ENCODE measurements at regions of chr18 and their contacts with region 1.

Region 1: GRCh38 chr18:47997338-47997780 is 66.9 kb upstream of the SMAD2 start:
- DNase-seq: peak; percentile 49
- H3K4me3 Mint-ChIP-seq: no peak overlapping the region
- H3K27ac Mint-ChIP-seq: no peak overlapping the region
- H3K4me1 Mint-ChIP-seq: no peaks in the 10 kb centered on the region
- H3K27me3 Mint-ChIP-seq: peaks cover 7% of the 10 kb centered on the region

Region 2: DNA sequence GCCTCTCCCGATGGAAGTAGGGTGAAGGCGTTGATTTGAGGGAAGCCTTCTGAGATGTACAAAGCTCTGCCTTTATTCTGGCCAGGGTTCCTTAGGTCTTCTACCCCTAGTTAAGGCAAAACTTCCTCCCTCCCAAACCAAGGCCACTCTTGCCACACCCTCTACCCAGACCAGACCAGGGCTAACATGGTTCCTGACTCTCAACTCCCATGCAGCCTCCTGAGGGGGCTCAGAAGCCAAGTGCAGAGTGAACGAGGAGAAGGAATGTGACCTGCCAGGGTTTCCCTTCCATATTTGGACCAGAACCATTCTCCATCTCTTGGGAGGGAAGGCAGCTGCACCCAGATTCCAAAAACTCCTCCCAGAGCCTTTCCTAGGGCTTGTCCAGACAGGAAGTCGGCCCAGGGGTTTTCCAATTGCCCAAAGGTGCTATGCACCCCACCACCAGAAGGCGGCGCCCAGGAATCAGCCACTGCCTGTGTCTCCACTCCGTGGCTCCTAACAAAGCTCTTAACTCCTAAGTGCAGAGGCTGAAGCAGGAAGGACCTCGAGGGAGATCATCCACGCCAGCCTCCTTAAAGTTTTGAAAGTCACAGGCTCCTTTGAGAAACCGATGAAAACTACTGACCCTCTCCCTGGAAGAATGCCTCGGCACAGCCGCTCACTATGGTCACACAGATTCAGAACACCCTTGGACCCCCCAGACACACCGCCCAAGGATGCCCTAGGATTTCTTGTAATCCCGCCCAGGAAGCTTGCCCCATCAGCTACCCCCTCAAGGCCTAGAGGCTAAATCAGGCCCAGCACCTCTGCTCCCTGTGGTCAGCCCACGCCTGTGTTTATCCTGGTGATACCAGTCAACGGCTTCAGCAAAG is 224.7 kb before region 1 on chr18:
- CTCF ChIA-PET with region 1: interaction called, 37 read pairs
- DNase-seq: peak; percentile 63
- H3K4me3 Mint-ChIP-seq: no peak overlapping the region
- H3K27ac Mint-ChIP-seq: no peak overlapping the region
- H3K4me1 Mint-ChIP-seq: no peaks in the 10 kb centered on the region
- H3K27me3 Mint-ChIP-seq: peaks cover 30% of the 10 kb centered on the region

Region 3: GRCh38 chr18:47986620-47987387 is 10.6 kb before region 1 on chr18:
- CTCF ChIA-PET with region 1: interaction called, 21 read pairs
- DNase-seq: no peak
- H3K4me3 Mint-ChIP-seq: no peak overlapping the region
- H3K27ac Mint-ChIP-seq: no peak overlapping the region
- H3K4me1 Mint-ChIP-seq: no peaks in the 10 kb centered on the region
- H3K27me3 Mint-ChIP-seq: peaks cover 16% of the 10 kb centered on the region

Region 4: GRCh38 chr18:48007955-48008701 is 10.8 kb after region 1 on chr18:
- CTCF ChIA-PET with region 1: interaction called, 13 read pairs
- DNase-seq: peak; percentile 60
- H3K4me3 Mint-ChIP-seq: peak overlapping the region; percentile 56
- H3K27ac Mint-ChIP-seq: no peak overlapping the region
- H3K4me1 Mint-ChIP-seq: peaks cover 10% of the 10 kb centered on the region
- H3K27me3 Mint-ChIP-seq: peaks cover 56% of the 10 kb centered on the region

Measured in activated naive CD4-positive, alpha-beta T cell treated with anti-CD3 and anti-CD28 coated beads, Interleukin-2, amount 10 ng/mL, durations not matched to agents 7 days and 5 days (primary cell).